ENCODE measurements at regions of chr2 and their contacts with region 1.

Region 1: GRCh38 chr2:96065381-96065930 is 30.7 kb upstream of the GPAT2 start:
- DNase-seq: no peak
- ATAC-seq: no peak
- H3K4me3 ChIP-seq: no peak overlapping the region
- H3K27ac ChIP-seq: no peak overlapping the region
- H3K4me1 ChIP-seq: no peaks in the 10 kb centered on the region
- H3K27me3 ChIP-seq: no peaks in the 10 kb centered on the region; a peak in 1 of 4 replicates
- CTCF ChIP-seq: no peak
- EP300 ChIP-seq: no peak
- POLR2A ChIP-seq: no peak
- RAD21 ChIP-seq: no peak

Region 2: DNA sequence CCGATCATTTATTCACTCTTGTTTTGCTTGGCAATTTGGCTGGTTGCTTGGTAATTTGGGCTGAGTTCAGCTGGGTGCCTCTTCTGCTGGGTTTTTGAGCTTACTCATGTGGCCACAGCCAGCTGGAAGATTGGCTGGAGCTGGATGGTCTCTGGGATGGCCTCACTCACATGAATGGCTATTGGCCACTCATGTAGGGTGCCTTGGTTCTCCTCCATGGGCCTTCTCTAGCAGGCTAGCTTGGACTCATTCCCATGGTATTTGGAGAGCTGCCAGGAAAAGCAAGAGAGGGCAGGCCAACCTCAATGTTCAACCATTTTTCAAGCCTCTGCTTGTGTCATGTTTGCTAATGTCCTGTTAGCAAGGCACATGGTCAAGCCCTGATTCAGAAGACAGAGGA is 1664.8 kb after region 1 on chr2:
- CTCF ChIA-PET with region 1: no interaction called
- POLR2A ChIA-PET with region 1: no interaction called
- RAD21 ChIA-PET with region 1: no interaction called
- SMC1A ChIA-PET with region 1: no interaction called
- in situ Hi-C with region 1: loop called (anchors 10 kb)
- intact Hi-C with region 1: no loop called
- DNase-seq: no peak
- ATAC-seq: no peak
- H3K4me3 ChIP-seq: no peak overlapping the region
- H3K27ac ChIP-seq: no peak overlapping the region
- H3K4me1 ChIP-seq: no peaks in the 10 kb centered on the region
- H3K27me3 ChIP-seq: no peaks in the 10 kb centered on the region
- CTCF ChIP-seq: no peak
- EP300 ChIP-seq: no peak
- POLR2A ChIP-seq: no peak
- RAD21 ChIP-seq: no peak

Region 3: GRCh38 chr2:98012561-98012991 is 1947.1 kb after region 1 on chr2:
- CTCF ChIA-PET with region 1: no interaction called
- POLR2A ChIA-PET with region 1: no interaction called
- RAD21 ChIA-PET with region 1: no interaction called
- SMC1A ChIA-PET with region 1: no interaction called
- in situ Hi-C with region 1: loop called (anchors 25 kb)
- intact Hi-C with region 1: no loop called
- DNase-seq: peak; percentile 88
- ATAC-seq: peak; percentile 83
- H3K4me3 ChIP-seq: peak overlapping the region; percentile 46
- H3K27ac ChIP-seq: peak overlapping the region; percentile 97
- H3K4me1 ChIP-seq: peaks cover 55% of the 10 kb centered on the region
- H3K27me3 ChIP-seq: no peaks in the 10 kb centered on the region
- CTCF ChIP-seq: no peak
- EP300 ChIP-seq: peak; percentile 85 to 99; a peak in 3 of 4 replicates
- POLR2A ChIP-seq: peak; percentile 59; the same call in 1 of the 2 replicates
- RAD21 ChIP-seq: 0 out of 2 replicates have a peak, but pooled peaks have one; percentile 24